ENCODE measurements at regions of chr3 and their contacts with region 1.

Region 1: GRCh38 chr3:64332459-64333350 is 107.4 kb upstream of the PRICKLE2 start:
- DNase-seq: peak; percentile 69
- H3K4me3 ChIP-seq: no peak overlapping the region
- CTCF ChIP-seq: no peak

Region 2: GRCh38 chr3:64291345-64291744 is 41.4 kb before region 1 on chr3:
- CTCF ChIA-PET with region 1: no interaction called
- POLR2A ChIA-PET with region 1: no interaction called
- DNase-seq: no peak
- H3K4me3 ChIP-seq: no peak overlapping the region
- CTCF ChIP-seq: no peak

Region 3: GRCh38 chr3:64345371-64345770 is 12.7 kb after region 1 on chr3:
- CTCF ChIA-PET with region 1: interaction called, 10 read pairs
- POLR2A ChIA-PET with region 1: no interaction called
- DNase-seq: no peak
- H3K4me3 ChIP-seq: no peak overlapping the region
- CTCF ChIP-seq: no peak